CD4-positive, alpha-beta T cell (primary cell): ENCODE measurements at regions of chr11 and their contacts with region 1.

Region 1: DNA sequence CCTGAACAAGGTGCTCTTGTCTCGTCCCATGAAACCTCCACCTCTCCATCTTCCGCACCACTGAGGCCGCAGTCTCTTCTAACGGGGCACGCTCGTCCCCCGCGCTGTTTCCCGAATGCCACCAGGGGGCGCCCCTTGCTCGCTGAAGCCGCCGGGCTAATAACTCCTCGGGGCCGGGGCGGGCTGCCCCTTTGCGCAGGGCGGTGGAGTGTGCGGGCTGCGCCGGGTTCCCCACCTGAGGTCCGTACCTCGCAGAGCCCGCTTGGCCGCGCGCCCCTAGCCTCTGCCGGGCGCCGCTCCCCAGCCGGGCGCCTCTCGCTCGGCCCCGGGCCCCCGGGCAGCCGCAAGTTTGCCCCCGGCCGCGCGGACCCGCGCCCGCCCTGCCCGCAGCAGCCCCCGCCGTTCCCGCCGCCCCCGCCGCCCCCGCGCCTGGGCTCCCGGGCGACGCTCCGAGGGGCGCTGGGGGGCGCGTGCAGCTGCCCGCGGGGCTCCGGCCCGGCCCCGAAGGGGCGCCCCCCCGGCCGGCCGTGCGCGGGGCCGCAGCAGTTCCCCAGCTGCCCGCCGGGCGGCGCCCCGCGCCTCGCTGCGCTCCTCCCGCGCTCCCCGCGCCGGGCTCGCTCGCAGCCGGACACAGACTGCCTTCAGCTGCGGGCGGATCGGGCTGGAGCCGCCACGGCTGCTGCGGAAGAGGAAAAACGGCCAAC is at the start of gene GRIK4:
- DNase-seq: peak; percentile 36 to 79 (median 62)
- ATAC-seq: peak; percentile 69
- H3K4me3 ChIP-seq: no peak within 1 kb of the TSS
- H3K4me3 Mint-ChIP-seq: peak within 1 kb of the TSS; percentile 30
- H3K27ac ChIP-seq: no peak within 1 kb of the TSS
- H3K27ac Mint-ChIP-seq: no peak within 1 kb of the TSS
- H3K4me1 ChIP-seq: no peaks in the 10 kb centered on the region
- H3K4me1 Mint-ChIP-seq: no peaks in the 10 kb centered on the region
- H3K27me3 ChIP-seq: peaks cover 38 to 57% of the 10 kb centered on the region in 2 experiments
- H3K27me3 Mint-ChIP-seq: peaks cover 91% of the 10 kb centered on the region
- CTCF ChIP-seq: peak; percentile 78
- total RNA-seq, gene GRIK4: not detected

Region 2: GRCh38 chr11:120413480-120413879 is 97.8 kb before region 1 on chr11:
- CTCF ChIA-PET with region 1: no interaction called
- POLR2A ChIA-PET with region 1: no interaction called
- intact Hi-C with region 1: no loop called
- DNase-seq: no peak
- ATAC-seq: no peak
- H3K4me3 ChIP-seq: no peak overlapping the region
- H3K4me3 Mint-ChIP-seq: no peak overlapping the region
- H3K27ac ChIP-seq: no peak overlapping the region
- H3K27ac Mint-ChIP-seq: no peak overlapping the region
- H3K4me1 ChIP-seq: no peaks in the 10 kb centered on the region
- H3K4me1 Mint-ChIP-seq: no peaks in the 10 kb centered on the region
- H3K27me3 ChIP-seq: no peaks in the 10 kb centered on the region
- H3K27me3 Mint-ChIP-seq: no peaks in the 10 kb centered on the region
- CTCF ChIP-seq: no peak

Region 3: GRCh38 chr11:120688163-120688562 is 176.9 kb after region 1 on chr11:
- CTCF ChIA-PET with region 1: no interaction called
- POLR2A ChIA-PET with region 1: no interaction called
- intact Hi-C with region 1: loop called in 1 of 2 experiments (anchors 5 kb)
- DNase-seq: no peak
- ATAC-seq: no peak
- H3K4me3 ChIP-seq: no peak overlapping the region
- H3K4me3 Mint-ChIP-seq: no peak overlapping the region
- H3K27ac ChIP-seq: no peak overlapping the region
- H3K27ac Mint-ChIP-seq: no peak overlapping the region
- H3K4me1 ChIP-seq: no peaks in the 10 kb centered on the region
- H3K4me1 Mint-ChIP-seq: no peaks in the 10 kb centered on the region
- H3K27me3 ChIP-seq: peaks cover 2 to 7% of the 10 kb centered on the region in 2 experiments
- H3K27me3 Mint-ChIP-seq: peaks cover 71% of the 10 kb centered on the region
- CTCF ChIP-seq: no peak

Region 4: GRCh38 chr11:120952461-120953434 is 441.5 kb after region 1 on chr11:
- CTCF ChIA-PET with region 1: no interaction called
- POLR2A ChIA-PET with region 1: no interaction called
- intact Hi-C with region 1: loop called (anchors 2 kb)
- DNase-seq: peak; percentile 14 to 72 (median 51)
- ATAC-seq: peak; percentile 79
- H3K4me3 ChIP-seq: peak overlapping the region; percentile 32
- H3K4me3 Mint-ChIP-seq: peak overlapping the region; percentile 56
- H3K27ac ChIP-seq: no peak overlapping the region
- H3K27ac Mint-ChIP-seq: no peak overlapping the region
- H3K4me1 ChIP-seq: peaks cover 20% of the 10 kb centered on the region
- H3K4me1 Mint-ChIP-seq: peaks cover 17% of the 10 kb centered on the region
- H3K27me3 ChIP-seq: peaks cover 6 to 15% of the 10 kb centered on the region in 2 experiments
- H3K27me3 Mint-ChIP-seq: peaks cover 51% of the 10 kb centered on the region
- CTCF ChIP-seq: peak; percentile 43

Region 5: DNA sequence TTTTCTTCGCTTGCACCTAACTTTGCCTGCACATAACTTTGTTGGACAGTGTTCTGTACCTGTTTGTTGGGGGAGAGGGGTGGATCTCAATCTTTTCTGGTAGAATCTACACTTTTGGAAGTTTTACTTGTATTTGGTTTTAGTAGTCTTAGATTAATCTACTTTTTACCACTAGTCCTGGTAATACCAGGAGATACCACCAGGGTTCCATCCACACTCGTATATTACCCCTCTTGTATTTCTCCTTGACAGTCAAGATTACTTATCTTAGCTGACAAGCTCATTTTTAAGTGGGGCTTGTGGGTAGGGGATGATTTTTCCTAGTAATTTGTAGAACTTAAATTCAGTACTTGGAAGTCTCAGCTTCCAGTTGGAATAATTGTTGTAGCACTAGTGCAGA is 552.5 kb after region 1 on chr11:
- CTCF ChIA-PET with region 1: no interaction called
- POLR2A ChIA-PET with region 1: no interaction called
- intact Hi-C with region 1: no loop called
- DNase-seq: peak in 2 of 14 experiments; percentile 5 to 6
- ATAC-seq: no peak
- H3K4me3 ChIP-seq: no peak overlapping the region
- H3K4me3 Mint-ChIP-seq: no peak overlapping the region
- H3K27ac ChIP-seq: no peak overlapping the region
- H3K27ac Mint-ChIP-seq: no peak overlapping the region
- H3K4me1 ChIP-seq: no peaks in the 10 kb centered on the region
- H3K4me1 Mint-ChIP-seq: no peaks in the 10 kb centered on the region
- H3K27me3 ChIP-seq: no peaks in the 10 kb centered on the region
- H3K27me3 Mint-ChIP-seq: no peaks in the 10 kb centered on the region
- CTCF ChIP-seq: peak; percentile 37

Region 6: GRCh38 chr11:121112498-121113455 is 601.5 kb after region 1 on chr11:
- CTCF ChIA-PET with region 1: no interaction called
- POLR2A ChIA-PET with region 1: no interaction called
- intact Hi-C with region 1: loop called (anchors 2 to 5 kb)
- DNase-seq: peak in 9 of 14 experiments; percentile 2 to 45 (median 11)
- ATAC-seq: no peak
- H3K4me3 ChIP-seq: no peak overlapping the region
- H3K4me3 Mint-ChIP-seq: no peak overlapping the region
- H3K27ac ChIP-seq: no peak overlapping the region
- H3K27ac Mint-ChIP-seq: no peak overlapping the region
- H3K4me1 ChIP-seq: peaks cover 4% of the 10 kb centered on the region
- H3K4me1 Mint-ChIP-seq: no peaks in the 10 kb centered on the region
- H3K27me3 ChIP-seq: peaks cover 4 to 6% of the 10 kb centered on the region in 2 experiments
- H3K27me3 Mint-ChIP-seq: peaks cover 23% of the 10 kb centered on the region
- CTCF ChIP-seq: peak; percentile 56

Region 7: GRCh38 chr11:121194731-121195596 is 683.7 kb after region 1 on chr11:
- CTCF ChIA-PET with region 1: no interaction called
- POLR2A ChIA-PET with region 1: no interaction called
- intact Hi-C with region 1: loop called in 1 of 2 experiments (anchors 2 kb)
- DNase-seq: peak in 13 of 14 experiments; percentile 5 to 81 (median 41)
- ATAC-seq: peak; percentile 51
- H3K4me3 ChIP-seq: no peak overlapping the region
- H3K4me3 Mint-ChIP-seq: no peak overlapping the region
- H3K27ac ChIP-seq: no peak overlapping the region
- H3K27ac Mint-ChIP-seq: no peak overlapping the region
- H3K4me1 ChIP-seq: no peaks in the 10 kb centered on the region
- H3K4me1 Mint-ChIP-seq: no peaks in the 10 kb centered on the region
- H3K27me3 ChIP-seq: peaks cover 2 to 12% of the 10 kb centered on the region in 2 experiments
- H3K27me3 Mint-ChIP-seq: peaks cover 45% of the 10 kb centered on the region
- CTCF ChIP-seq: peak; percentile 98